ENCODE measurements at regions of chr4 and their contacts with region 1.

Region 1: DNA sequence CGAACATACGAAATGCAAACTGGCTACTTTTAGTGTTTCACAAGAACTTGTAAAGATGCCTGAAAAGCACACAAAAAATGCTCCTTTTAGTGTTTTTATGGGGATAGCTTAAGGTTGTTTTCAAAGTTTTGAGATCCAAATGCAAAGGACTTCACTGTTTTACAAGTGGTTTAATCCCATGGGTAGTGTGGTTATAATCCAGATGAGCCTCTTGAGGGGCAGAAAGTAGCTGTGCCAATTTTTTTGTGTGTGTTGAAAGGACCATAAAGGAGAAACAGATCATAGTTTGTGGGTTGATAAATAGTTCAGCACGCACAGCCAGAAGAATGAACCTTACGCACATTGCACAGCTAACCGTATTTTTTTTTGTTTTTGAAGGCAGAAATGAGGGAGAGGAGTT is 126.9 kb upstream of the GIMD1 start:
- DNase-seq: no peak
- ATAC-seq: no peak
- H3K4me3 ChIP-seq: no peak overlapping the region
- H3K27ac ChIP-seq: no peak overlapping the region
- H3K4me1 ChIP-seq: no peaks in the 10 kb centered on the region
- H3K27me3 ChIP-seq: peaks cover 0 to under 1% (median 0%) of the 10 kb centered on the region in 7 donors
- CTCF ChIP-seq: no peak

Region 2: DNA sequence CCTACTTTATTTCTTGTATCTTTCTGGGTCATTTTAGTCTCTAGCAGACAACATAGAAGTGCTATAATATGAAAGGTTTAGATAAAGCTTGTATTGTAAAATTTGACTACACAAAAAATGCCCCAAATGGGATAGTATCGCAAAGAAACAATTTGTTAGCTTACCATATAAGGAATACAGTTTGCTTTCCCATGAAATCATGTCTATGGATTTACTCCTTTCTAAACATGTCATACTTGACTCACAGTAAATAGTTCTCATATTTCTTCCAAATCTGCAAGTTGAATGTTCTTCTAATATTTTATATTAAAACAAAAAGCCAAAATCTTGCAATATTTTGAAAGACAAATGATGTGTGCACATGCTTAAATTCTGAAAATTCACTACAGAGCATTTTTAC is 1125.5 kb before region 1 on chr4:
- intact Hi-C with region 1: loop called in 1 of 10 experiments (anchors 5 kb)
- DNase-seq: no peak
- ATAC-seq: no peak
- H3K4me3 ChIP-seq: no peak overlapping the region
- H3K27ac ChIP-seq: no peak overlapping the region
- H3K4me1 ChIP-seq: peaks cover 0 to 20% (median 7%) of the 10 kb centered on the region in 9 donors
- H3K27me3 ChIP-seq: no peaks in the 10 kb centered on the region
- CTCF ChIP-seq: no peak

Region 3: GRCh38 chr4:105387466-105387865 is 1108.0 kb before region 1 on chr4:
- intact Hi-C with region 1: no loop called
- DNase-seq: no peak
- ATAC-seq: no peak
- H3K4me3 ChIP-seq: no peak overlapping the region
- H3K27ac ChIP-seq: no peak overlapping the region
- H3K4me1 ChIP-seq: peaks cover 0 to 13% (median 0%) of the 10 kb centered on the region in 9 donors
- H3K27me3 ChIP-seq: no peaks in the 10 kb centered on the region
- CTCF ChIP-seq: no peak

Region 4: GRCh38 chr4:106266201-106266600 is 229.3 kb before region 1 on chr4:
- intact Hi-C with region 1: loop called in 5 of 10 experiments (anchors 5 to 10 kb)
- DNase-seq: no peak
- ATAC-seq: no peak
- H3K4me3 ChIP-seq: no peak overlapping the region
- H3K27ac ChIP-seq: no peak overlapping the region
- H3K4me1 ChIP-seq: peaks cover 0 to 22% (median 9%) of the 10 kb centered on the region in 9 donors
- H3K27me3 ChIP-seq: no peaks in the 10 kb centered on the region
- CTCF ChIP-seq: peak in 7 of 9 donors; percentile 36 to 62 (median 46)

Region 5: GRCh38 chr4:106796876-106797275 is 301.4 kb after region 1 on chr4:
- intact Hi-C with region 1: no loop called
- DNase-seq: no peak
- ATAC-seq: no peak
- H3K4me3 ChIP-seq: no peak overlapping the region
- H3K27ac ChIP-seq: no peak overlapping the region
- H3K4me1 ChIP-seq: no peaks in the 10 kb centered on the region
- H3K27me3 ChIP-seq: no peaks in the 10 kb centered on the region
- CTCF ChIP-seq: no peak